Activated T-helper 1 cell treated with anti-CD3 and anti-CD28 coated beads, Interleukin-12 subunit alpha, Interleukin-12 subunit beta, Interleukin-2, Interleukin-4 antibody, amounts not matched to agents 30 ng/mL and 10 ng/mL and 1 ng/mL, durations not matched to agents 14 hours and 24 hours and 36 hours (primary cell): ENCODE measurements at regions of chr10 and their contacts with region 1.

Region 1: DNA sequence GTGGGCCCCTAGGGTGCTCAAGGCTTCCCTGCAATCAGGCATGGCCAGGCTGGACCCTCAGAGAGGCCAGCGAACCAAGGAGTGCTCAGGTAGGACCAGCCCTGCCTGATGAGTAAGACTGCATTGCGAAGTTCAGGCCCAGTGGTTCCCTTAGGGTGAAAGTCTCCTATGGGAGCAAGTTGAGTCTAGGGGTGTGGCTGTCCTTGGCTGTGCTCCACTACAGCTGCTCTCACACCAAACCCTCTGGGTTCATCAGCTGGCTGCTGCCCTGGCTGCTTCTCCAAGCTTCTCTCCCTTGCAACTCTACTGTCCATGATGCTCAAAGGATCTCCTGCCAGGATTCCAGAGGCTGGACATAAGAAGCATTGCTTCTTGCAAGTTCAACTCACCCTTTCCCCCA is 18.7 kb downstream of the FAM25A start:
- DNase-seq: no peak
- H3K4me3 Mint-ChIP-seq: no peak overlapping the region
- H3K27ac Mint-ChIP-seq: no peak overlapping the region
- H3K4me1 Mint-ChIP-seq: no peaks in the 10 kb centered on the region
- H3K27me3 Mint-ChIP-seq: peaks cover 10% of the 10 kb centered on the region

Region 2: DNA sequence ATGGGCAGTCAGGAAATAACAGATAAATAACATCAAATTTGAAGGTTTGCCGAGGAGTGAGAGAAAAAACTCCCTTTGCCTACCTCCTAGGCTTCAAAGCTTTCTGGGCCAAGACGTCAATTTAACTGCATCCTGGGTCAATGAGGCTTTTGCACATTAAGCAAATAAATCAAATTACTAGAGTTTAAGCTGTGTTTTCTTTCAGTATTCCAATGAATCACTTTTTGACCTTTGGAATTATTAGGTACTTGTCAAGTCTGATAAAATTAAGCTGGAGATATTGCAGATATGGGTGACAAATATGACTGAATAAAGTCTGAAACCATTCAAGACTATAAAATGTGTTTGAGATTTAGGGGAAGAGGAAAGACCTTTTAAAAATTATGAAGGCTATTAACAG is 33.7 kb after region 1 on chr10:
- intact Hi-C with region 1: loop called (anchors 5 kb)
- DNase-seq: no peak
- H3K4me3 Mint-ChIP-seq: no peak overlapping the region
- H3K27ac Mint-ChIP-seq: no peak overlapping the region
- H3K4me1 Mint-ChIP-seq: no peaks in the 10 kb centered on the region
- H3K27me3 Mint-ChIP-seq: no peaks in the 10 kb centered on the region

Region 3: DNA sequence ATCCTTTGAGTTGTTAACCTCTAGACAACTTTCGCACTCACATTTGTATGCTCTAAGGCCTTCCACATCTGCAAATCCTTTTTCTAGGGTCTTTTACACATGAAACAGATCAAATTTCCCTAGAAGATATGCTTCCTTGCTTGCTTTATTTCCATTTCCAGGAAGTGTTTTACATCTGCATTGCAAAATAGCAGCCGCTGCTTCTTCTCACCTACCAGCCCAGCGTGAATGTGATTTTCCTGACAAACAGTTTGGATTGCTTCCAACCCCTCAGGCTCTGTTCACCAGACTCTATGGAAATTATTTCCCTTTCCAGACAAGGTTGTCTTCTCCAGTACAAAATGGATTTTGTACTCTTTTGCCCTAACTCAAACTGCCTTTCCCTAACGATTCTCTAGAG is 570.0 kb after region 1 on chr10:
- intact Hi-C with region 1: no loop called
- DNase-seq: no peak
- H3K4me3 Mint-ChIP-seq: no peak overlapping the region
- H3K27ac Mint-ChIP-seq: no peak overlapping the region
- H3K4me1 Mint-ChIP-seq: no peaks in the 10 kb centered on the region
- H3K27me3 Mint-ChIP-seq: peaks cover 2% of the 10 kb centered on the region